H1 (cell line): ENCODE measurements at regions of chr2 and their contacts with region 1.

Region 1: DNA sequence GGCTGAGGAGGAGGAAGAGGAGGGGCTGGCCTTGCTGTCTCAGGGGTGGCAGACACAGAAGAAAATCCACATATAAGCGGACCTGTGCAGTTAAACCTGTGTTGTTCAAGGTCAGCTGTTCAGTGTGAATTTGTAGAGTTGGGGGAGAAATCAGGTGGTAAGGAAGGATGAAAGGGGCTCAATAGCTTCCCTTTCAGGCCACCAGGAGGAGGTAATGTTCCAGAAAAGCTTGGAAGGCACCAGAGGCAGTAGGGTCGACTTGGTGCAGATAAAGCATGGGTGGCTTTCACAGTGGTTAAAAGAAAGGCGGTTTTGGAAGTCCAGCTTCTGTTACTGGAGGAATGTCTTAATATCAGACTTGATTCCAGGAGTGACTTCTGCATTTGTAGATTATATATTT is 167.4 kb downstream of the THSD7B start:
- DNase-seq: peak; percentile 10 to 50
- H3K4me3 ChIP-seq: no peak overlapping the region
- H3K27ac ChIP-seq: no peak overlapping the region
- H3K4me1 ChIP-seq: no peaks in the 10 kb centered on the region
- H3K27me3 ChIP-seq: no peaks in the 10 kb centered on the region
- CTCF ChIP-seq: peak; percentile 55 to 86 (median 75)
- EP300 ChIP-seq: no peak
- POLR2A ChIP-seq: no peak
- RAD21 ChIP-seq: peak; percentile 93 to 95

Region 2: DNA sequence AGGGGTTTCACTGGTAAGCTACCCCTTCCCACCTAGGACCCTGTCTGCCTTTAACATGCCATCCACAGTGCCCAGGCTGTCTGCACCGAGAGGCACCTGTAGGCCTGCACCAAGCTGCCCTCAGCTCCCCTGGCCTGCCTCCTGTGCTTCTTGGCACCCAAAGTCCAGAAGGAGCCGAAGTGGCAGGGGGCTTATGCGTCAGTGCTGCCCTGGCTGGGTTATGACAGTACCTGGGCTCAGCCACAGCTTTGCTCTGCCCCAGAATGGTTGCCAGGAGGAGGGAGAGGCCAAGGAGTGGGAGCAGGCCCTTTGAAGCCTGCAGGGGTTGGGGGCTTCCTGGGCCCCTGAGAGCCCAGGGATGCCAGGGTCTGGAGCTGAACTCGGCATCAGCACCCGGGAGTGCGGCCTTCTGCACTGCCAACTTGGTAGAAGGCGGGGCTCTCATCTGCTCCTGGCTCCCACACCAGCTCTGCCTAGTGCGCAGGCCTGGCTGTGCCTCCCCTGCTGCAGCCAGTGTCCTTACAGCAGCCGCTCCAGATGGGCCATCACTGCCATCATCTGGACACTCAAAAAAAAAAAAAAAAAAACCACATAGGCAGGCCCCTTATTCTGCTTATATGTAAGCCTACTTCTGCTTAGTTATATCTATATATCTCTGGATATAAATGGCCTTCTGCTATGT is 11.9 kb before region 1 on chr2:
- CTCF ChIA-PET with region 1: interaction called, 18 read pairs
- POLR2A ChIA-PET with region 1: no interaction called
- DNase-seq: no peak
- H3K4me3 ChIP-seq: no peak overlapping the region
- H3K27ac ChIP-seq: no peak overlapping the region
- H3K4me1 ChIP-seq: no peaks in the 10 kb centered on the region
- H3K27me3 ChIP-seq: no peaks in the 10 kb centered on the region
- CTCF ChIP-seq: peak in 2 of 3 experiments; percentile 16 to 44; a peak in 3 of 4 replicates
- EP300 ChIP-seq: no peak
- POLR2A ChIP-seq: no peak
- RAD21 ChIP-seq: peak; percentile 64 to 77

Region 3: DNA sequence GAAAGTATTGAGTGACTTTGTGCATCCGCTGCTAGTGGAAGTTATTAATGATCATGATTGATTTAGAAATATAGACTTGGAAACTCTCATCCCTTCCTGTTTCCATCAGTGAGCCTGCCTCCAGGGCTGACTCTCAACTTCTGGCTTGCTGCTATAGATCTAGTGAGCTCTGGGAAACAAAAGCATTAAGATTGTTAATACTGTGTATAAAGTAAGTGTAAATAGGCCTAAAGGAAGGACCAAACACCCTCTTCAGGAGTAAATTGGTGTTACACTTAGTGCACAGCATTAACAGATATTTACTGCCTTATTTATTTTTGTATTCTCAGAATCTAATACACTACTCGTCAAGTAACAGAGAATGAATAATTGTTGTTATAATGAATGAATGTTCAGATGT is 118.2 kb after region 1 on chr2:
- CTCF ChIA-PET with region 1: interaction called, 14 read pairs
- POLR2A ChIA-PET with region 1: no interaction called
- DNase-seq: no peak
- H3K4me3 ChIP-seq: no peak overlapping the region
- H3K27ac ChIP-seq: no peak overlapping the region
- H3K4me1 ChIP-seq: no peaks in the 10 kb centered on the region
- H3K27me3 ChIP-seq: no peaks in the 10 kb centered on the region
- CTCF ChIP-seq: peak in 1 of 3 experiments; percentile 46; a peak in 2 of 4 replicates
- EP300 ChIP-seq: no peak
- POLR2A ChIP-seq: no peak
- RAD21 ChIP-seq: peak; percentile 39 to 45

Region 4: GRCh38 chr2:137838255-137839092 is 905.8 kb after region 1 on chr2:
- CTCF ChIA-PET with region 1: interaction called, 35 read pairs
- POLR2A ChIA-PET with region 1: no interaction called
- DNase-seq: no peak
- H3K4me3 ChIP-seq: no peak overlapping the region
- H3K27ac ChIP-seq: no peak overlapping the region
- H3K4me1 ChIP-seq: peaks cover 0 to 6% (median 0%) of the 10 kb centered on the region in 4 experiments; a peak in 2 of 7 replicates
- H3K27me3 ChIP-seq: no peaks in the 10 kb centered on the region
- CTCF ChIP-seq: peak in 2 of 3 experiments; percentile 50 to 53; a peak in 2 of 4 replicates
- EP300 ChIP-seq: no peak
- POLR2A ChIP-seq: no peak
- RAD21 ChIP-seq: peak; percentile 93 to 97